Psoas muscle (tissue), 8 donors: ENCODE measurements at regions of chr12 and their contacts with region 1.

Region 1: GRCh38 chr12:68358532-68359485 is 26.6 kb upstream of the MDM1 start:
- DNase-seq: peak in 1 of 2 donors; percentile 21
- ATAC-seq: peak; percentile 75 to 97 (median 86)
- H3K4me3 ChIP-seq: no peak overlapping the region
- H3K27ac ChIP-seq: peak overlapping the region; percentile 5
- H3K4me1 ChIP-seq: peaks cover 13% of the 10 kb centered on the region
- H3K27me3 ChIP-seq: no peaks in the 10 kb centered on the region
- CTCF ChIP-seq: peak; percentile 68

Region 2: DNA sequence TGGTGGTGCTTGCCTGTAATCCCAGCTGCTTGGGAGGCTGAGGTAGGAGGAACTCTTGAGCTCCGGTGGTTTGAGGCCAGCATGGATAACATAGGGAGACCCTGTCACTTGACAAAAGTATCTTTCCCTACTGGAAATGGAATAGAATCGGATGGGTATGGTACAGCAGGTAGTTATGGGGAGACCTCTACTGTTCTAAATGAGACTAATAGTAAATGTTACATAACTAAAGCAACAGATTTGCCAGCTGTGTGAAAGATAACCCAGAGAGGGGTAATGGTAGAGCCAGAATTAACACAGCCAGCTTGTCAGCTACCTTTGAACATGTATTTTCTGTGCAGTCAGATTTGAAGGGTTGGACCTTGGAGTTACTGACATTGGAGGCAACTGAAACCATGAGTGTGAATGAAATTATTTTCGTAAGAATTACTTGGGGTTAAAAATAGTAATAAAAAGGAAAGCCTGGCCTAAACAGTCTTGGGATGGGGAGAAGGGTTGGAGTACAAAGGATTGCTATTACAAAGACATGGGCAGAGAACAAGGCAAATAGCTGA is 306.3 kb after region 1 on chr12:
- intact Hi-C with region 1: loop called in 1 of 2 experiments (anchors 5 kb)
- DNase-seq: no peak
- ATAC-seq: peak in 3 of 4 donors; percentile 60 to 76 (median 76)
- H3K4me3 ChIP-seq: no peak overlapping the region
- H3K27ac ChIP-seq: no peak overlapping the region
- H3K4me1 ChIP-seq: peaks cover 4% of the 10 kb centered on the region
- H3K27me3 ChIP-seq: no peaks in the 10 kb centered on the region
- CTCF ChIP-seq: peak; percentile 10

Region 3: DNA sequence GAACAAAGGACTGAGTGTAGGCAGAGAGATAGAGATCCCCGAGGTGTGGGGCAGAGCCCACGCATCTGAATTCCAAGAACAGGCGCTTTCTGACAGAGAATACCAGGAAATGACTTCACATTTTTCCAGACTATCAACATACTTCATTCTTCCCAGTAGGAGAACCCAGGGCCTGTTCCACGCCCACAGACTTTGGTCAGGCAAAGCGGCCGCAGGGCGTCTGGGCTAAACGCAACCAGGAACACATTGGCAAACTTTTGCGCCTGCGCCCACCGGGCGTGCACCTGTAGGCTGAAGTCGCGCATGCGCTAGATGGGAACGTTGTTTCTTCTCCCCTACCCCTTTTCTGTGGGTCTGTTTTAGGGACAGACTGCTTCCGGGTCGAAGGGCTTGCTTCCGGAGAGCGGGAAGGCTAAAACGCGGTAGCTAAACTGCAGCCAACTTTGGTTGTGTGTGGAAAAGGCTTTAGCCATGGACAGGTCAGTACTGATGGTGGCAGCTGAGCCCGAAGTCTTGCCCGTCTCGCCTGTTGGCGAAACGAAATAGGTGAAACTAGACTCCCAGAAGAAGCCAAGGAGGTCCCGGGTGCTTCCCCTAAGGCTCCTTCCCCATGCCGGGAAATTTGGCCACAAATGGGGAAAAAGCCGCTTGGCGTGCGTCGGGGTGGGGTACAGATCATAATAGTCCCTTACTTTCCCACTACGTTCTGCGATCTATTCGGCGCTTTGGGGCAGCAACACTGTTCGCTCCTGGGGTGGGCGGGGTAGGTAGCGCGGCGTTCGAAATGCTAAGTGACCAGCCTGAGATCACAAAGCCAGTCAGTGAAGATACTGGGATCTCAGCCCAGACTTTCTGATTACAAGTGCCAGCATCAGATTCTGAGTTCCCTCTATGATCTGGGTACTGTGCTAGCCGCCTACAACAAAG is 328.0 kb after region 1 on chr12 and contains the start of gene NUP107:
- intact Hi-C with region 1: loop called (anchors 5 kb)
- DNase-seq: peak; percentile 99 to 100
- ATAC-seq: peak; percentile 99 to 100 (median 99)
- H3K4me3 ChIP-seq: peak within 1 kb of the TSS; percentile 86
- H3K27ac ChIP-seq: peak within 1 kb of the TSS; percentile 81
- H3K4me1 ChIP-seq: peaks cover 14% of the 10 kb centered on the region
- H3K27me3 ChIP-seq: no peaks in the 10 kb centered on the region
- CTCF ChIP-seq: peak; percentile 11
- total RNA-seq, gene NUP107: 17.6 to 21.1 (median 20.2) TPM